Activated T-helper 1 cell treated with anti-CD3 and anti-CD28 coated beads, Interleukin-12 subunit alpha, Interleukin-12 subunit beta, Interleukin-2, Interleukin-4 antibody, amounts not matched to agents 30 ng/mL and 10 ng/mL and 1 ng/mL, durations not matched to agents 14 hours and 24 hours and 36 hours (primary cell): ENCODE measurements at regions of chr9 and their contacts with region 1.

Region 1: DNA sequence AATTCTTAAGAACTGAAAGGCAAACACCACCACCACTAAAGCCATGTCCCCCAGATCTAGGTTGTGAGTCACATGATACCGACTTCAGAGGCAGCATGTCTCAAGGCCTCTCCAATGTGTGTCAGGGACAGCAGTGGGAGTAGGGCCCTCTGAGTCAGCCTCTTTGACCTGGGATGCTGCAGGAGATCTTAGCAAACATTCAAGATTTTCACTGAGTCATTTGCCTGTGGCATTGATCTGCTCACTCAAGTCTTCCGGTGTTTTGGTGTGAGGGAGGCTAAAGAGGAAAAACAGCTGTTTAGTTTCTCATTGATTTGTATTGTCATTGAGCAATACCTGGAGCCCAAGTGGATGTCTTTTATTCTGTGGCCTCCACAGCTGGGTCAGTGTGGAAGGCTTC is 36.1 kb downstream of the TMC1 start:
- DNase-seq: peak; percentile 21
- H3K4me3 Mint-ChIP-seq: peak overlapping the region; percentile 3
- H3K27ac Mint-ChIP-seq: peak overlapping the region; percentile 90
- H3K4me1 Mint-ChIP-seq: peaks cover 21% of the 10 kb centered on the region
- H3K27me3 Mint-ChIP-seq: no peaks in the 10 kb centered on the region

Region 2: DNA sequence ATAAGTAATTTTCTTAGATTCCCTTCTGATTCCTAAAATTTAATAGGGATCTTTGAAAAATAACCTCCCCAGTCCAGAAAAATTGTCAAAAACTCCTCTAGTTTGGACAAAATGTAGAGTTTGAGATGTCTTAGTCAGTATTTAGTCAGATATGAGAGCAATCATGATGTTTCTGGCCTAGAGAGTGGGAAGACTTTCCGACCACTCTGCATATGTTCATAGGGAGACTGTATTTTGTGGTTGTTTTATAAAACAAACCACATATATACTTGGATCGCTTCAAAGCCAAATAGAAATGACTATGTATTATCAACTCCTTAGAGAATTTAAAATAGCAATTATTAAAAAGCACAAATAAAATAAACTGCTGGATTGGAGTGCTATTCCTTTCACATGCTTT is 208.3 kb before region 1 on chr9:
- intact Hi-C with region 1: loop called (anchors 1 kb)
- DNase-seq: no peak
- H3K4me3 Mint-ChIP-seq: no peak overlapping the region
- H3K27ac Mint-ChIP-seq: peak overlapping the region; percentile 26
- H3K4me1 Mint-ChIP-seq: peaks cover 21% of the 10 kb centered on the region
- H3K27me3 Mint-ChIP-seq: no peaks in the 10 kb centered on the region

Region 3: GRCh38 chr9:72443855-72444254 is 113.7 kb before region 1 on chr9:
- intact Hi-C with region 1: loop called (anchors 1 kb)
- DNase-seq: peak; percentile 8
- H3K4me3 Mint-ChIP-seq: peak overlapping the region; percentile 20
- H3K27ac Mint-ChIP-seq: peak overlapping the region; percentile 85
- H3K4me1 Mint-ChIP-seq: peaks cover 43% of the 10 kb centered on the region
- H3K27me3 Mint-ChIP-seq: no peaks in the 10 kb centered on the region

Region 4: DNA sequence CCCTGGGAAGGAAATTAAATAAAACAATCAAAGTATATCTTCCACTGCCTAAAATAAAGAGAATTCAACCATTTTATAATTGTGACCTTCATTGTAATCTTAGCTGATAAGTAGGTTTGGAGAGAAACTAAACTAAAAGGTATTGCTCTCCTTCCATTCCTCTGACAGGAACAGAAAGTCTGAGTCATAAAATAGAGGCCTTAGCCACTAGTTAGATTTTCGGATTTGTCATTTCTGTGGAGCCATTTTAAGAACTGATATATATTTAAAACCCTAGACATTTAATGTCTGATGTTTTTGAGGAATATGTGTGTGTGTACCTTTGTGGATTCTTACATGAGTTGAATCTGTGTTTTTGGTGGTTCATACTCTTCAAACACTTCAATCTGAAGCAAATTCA is 47.9 kb before region 1 on chr9:
- intact Hi-C with region 1: loop called (anchors 1 kb)
- DNase-seq: no peak
- H3K4me3 Mint-ChIP-seq: peak overlapping the region; percentile 38
- H3K27ac Mint-ChIP-seq: peak overlapping the region; percentile 79
- H3K4me1 Mint-ChIP-seq: peaks cover 20% of the 10 kb centered on the region
- H3K27me3 Mint-ChIP-seq: no peaks in the 10 kb centered on the region

Region 5: DNA sequence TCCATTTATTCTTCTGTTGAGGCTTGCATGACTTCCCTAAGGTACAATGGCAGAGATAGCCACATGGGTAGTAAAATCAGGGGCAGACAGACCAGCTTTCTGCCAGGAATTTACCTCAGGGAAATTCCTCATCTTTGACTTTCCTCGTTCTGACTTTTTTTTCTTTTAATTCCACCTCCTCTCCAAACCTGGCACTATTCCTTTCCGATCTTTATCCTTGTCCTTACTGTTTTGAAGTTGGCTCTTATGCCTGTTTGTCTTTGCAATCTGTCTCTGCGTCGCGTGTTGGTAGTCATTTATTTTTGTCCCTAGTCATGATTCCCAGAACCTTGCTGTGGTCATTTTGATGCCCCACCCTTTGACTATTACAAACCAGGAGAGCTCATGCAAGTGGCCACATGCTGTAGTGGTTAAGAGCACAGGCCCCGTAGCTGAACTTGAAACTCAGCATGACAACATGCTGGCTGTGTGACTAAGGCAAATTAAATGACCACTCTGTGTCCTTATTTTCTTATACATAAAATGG is 17.1 kb before region 1 on chr9:
- intact Hi-C with region 1: loop called (anchors 1 kb)
- DNase-seq: no peak
- H3K4me3 Mint-ChIP-seq: no peak overlapping the region
- H3K27ac Mint-ChIP-seq: no peak overlapping the region
- H3K4me1 Mint-ChIP-seq: peaks cover 36% of the 10 kb centered on the region
- H3K27me3 Mint-ChIP-seq: no peaks in the 10 kb centered on the region